ENCODE measurements at regions of chr4 and their contacts with region 1.

Region 1: DNA sequence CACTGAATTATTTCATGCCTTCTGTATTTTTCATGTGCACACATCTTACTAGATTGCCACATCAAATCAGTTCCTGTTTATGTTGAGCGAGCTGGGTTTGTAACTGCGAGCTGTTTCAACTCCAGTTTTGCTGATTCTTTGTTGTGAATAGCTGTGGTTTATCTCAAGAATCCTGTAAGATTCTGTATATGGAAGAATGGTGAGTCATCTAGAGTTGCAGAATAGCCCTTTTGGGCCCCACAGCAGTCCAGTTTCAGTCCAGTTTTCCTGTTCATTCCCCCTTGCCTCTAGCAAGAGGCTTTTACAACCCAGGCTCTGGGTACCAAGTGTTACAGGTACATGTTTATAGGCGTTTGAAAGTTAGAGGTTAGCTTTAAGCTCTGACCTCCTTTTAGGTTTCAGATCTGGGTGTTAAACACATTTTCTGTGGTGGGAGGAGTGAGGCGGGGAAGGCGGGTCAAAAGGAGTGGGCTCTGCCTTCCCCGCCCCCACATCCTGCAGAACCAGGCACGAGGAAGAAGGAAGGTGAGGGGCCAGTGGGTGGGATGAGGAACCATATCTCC is 32.7 kb downstream of the TBC1D14 start:
- DNase-seq: peak in 13 of 14 experiments; percentile 17 to 79 (median 36)
- ATAC-seq: peak; percentile 86
- H3K4me3 ChIP-seq: peak overlapping the region; percentile 40
- H3K4me3 Mint-ChIP-seq: peak overlapping the region; percentile 83
- H3K27ac ChIP-seq: peak overlapping the region; percentile 62 to 81
- H3K27ac Mint-ChIP-seq: peak overlapping the region; percentile 95
- H3K4me1 ChIP-seq: peaks cover 86% of the 10 kb centered on the region
- H3K4me1 Mint-ChIP-seq: peaks cover 73% of the 10 kb centered on the region
- H3K27me3 ChIP-seq: no peaks in the 10 kb centered on the region
- H3K27me3 Mint-ChIP-seq: no peaks in the 10 kb centered on the region
- CTCF ChIP-seq: no peak

Region 2: DNA sequence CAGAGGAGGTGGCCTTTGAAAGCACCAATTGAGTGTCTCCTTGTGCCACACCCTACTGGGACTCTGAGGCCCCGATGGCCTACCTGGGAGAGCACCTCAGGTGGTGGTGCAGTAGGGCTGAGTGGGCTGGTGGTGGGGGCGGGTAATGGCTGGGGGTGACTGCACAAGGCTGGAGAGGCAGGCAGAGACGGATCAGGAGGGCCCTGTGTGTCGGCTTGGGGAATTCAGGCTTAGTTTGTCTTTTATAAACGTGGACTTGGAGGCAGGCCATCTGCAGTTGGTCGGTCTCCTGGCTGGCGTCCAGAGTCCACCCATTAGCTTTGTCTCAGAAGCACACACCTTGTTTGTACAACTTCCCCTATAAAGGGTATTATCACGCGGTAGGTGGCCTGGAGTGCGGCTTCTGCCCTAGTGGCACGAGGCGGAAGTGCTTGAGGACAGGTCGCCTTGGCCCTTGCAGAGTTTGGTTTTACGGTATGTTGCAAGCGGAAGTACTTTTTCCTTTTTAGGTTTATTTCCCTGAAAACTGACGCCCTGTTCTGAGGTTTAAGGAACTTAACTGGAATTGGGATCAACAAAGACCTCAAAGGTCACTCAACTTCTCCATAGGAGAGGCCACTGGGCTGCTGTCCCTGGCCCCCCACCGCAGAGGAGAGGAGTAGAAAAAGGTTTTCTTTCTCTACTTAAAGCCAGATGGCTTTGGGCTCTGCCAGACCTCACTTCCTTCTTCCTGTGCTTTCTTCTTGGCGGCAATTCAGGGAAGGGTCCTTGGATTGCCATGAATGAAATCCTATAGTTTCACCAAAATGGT is 24.7 kb before region 1 on chr4:
- CTCF ChIA-PET with region 1: interaction called, 4 read pairs
- POLR2A ChIA-PET with region 1: interaction called, 64 read pairs
- intact Hi-C with region 1: loop called in 1 of 2 experiments (anchors 1 kb)
- DNase-seq: peak in 7 of 14 experiments; percentile 27 to 74 (median 48)
- ATAC-seq: peak; percentile 46
- H3K4me3 ChIP-seq: peak overlapping the region; percentile 37
- H3K4me3 Mint-ChIP-seq: peak overlapping the region; percentile 46
- H3K27ac ChIP-seq: peak overlapping the region; percentile 59 to 89
- H3K27ac Mint-ChIP-seq: peak overlapping the region; percentile 90
- H3K4me1 ChIP-seq: peaks cover 95% of the 10 kb centered on the region
- H3K4me1 Mint-ChIP-seq: peaks cover 76% of the 10 kb centered on the region
- H3K27me3 ChIP-seq: no peaks in the 10 kb centered on the region
- H3K27me3 Mint-ChIP-seq: no peaks in the 10 kb centered on the region
- CTCF ChIP-seq: peak; percentile 51

Region 3: DNA sequence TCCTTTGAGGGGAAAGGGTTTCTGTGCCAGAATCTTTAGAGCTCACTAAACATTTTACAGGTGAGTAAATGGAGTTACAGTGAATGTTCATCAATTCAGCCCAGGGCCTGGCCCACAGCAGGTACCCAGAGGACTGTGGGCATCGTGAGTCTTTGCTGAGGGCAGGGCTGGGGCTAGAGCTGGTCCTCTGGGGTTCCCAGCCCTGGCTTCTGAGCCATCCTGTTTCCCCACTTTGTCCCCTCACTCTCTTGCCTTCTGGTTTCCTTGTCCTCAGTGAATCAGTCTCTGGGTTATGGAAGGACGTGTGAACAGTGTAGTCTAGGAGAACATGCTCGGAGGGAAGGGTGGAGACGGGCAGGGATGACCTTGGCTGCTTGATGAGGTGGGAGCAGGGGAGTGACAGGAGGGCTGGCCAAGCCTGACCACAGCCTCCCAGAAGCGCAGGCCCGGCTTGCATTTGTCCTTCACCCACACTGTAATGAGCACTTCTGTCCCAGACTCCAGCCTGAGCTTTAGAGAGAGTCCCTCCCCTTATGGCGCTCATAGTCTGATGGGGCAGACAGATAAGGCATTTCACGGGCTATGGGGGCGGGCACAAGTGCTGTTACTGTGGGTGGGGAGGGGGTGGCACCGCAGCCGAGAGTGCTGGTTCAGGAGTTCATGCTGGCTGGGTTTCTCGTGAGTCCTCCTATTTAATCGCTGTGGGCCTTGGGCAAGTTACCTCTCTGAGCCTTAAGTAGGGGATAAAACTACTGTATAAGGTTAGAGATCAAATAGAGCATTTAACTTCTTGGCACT is 15.4 kb before region 1 on chr4:
- CTCF ChIA-PET with region 1: no interaction called
- POLR2A ChIA-PET with region 1: interaction called, 50 read pairs
- intact Hi-C with region 1: loop called (anchors 1 kb)
- DNase-seq: peak; percentile 42 to 85 (median 67)
- ATAC-seq: peak; percentile 97
- H3K4me3 ChIP-seq: peak overlapping the region; percentile 10
- H3K4me3 Mint-ChIP-seq: peak overlapping the region; percentile 83
- H3K27ac ChIP-seq: peak overlapping the region; percentile 28 to 57
- H3K27ac Mint-ChIP-seq: peak overlapping the region; percentile 92
- H3K4me1 ChIP-seq: peaks cover 79% of the 10 kb centered on the region
- H3K4me1 Mint-ChIP-seq: peaks cover 81% of the 10 kb centered on the region
- H3K27me3 ChIP-seq: no peaks in the 10 kb centered on the region
- H3K27me3 Mint-ChIP-seq: no peaks in the 10 kb centered on the region
- CTCF ChIP-seq: no peak

Region 4: GRCh38 chr4:6974138-6974848 is 32.0 kb after region 1 on chr4:
- CTCF ChIA-PET with region 1: interaction called, 10 read pairs
- POLR2A ChIA-PET with region 1: interaction called, 5 read pairs
- intact Hi-C with region 1: no loop called
- DNase-seq: peak; percentile 56 to 89 (median 77)
- ATAC-seq: peak; percentile 98
- H3K4me3 ChIP-seq: no peak overlapping the region
- H3K4me3 Mint-ChIP-seq: no peak overlapping the region
- H3K27ac ChIP-seq: no peak overlapping the region
- H3K27ac Mint-ChIP-seq: peak overlapping the region; percentile 49
- H3K4me1 ChIP-seq: peaks cover 6% of the 10 kb centered on the region
- H3K4me1 Mint-ChIP-seq: peaks cover 15% of the 10 kb centered on the region
- H3K27me3 ChIP-seq: no peaks in the 10 kb centered on the region
- H3K27me3 Mint-ChIP-seq: no peaks in the 10 kb centered on the region
- CTCF ChIP-seq: peak; percentile 93

Region 5: DNA sequence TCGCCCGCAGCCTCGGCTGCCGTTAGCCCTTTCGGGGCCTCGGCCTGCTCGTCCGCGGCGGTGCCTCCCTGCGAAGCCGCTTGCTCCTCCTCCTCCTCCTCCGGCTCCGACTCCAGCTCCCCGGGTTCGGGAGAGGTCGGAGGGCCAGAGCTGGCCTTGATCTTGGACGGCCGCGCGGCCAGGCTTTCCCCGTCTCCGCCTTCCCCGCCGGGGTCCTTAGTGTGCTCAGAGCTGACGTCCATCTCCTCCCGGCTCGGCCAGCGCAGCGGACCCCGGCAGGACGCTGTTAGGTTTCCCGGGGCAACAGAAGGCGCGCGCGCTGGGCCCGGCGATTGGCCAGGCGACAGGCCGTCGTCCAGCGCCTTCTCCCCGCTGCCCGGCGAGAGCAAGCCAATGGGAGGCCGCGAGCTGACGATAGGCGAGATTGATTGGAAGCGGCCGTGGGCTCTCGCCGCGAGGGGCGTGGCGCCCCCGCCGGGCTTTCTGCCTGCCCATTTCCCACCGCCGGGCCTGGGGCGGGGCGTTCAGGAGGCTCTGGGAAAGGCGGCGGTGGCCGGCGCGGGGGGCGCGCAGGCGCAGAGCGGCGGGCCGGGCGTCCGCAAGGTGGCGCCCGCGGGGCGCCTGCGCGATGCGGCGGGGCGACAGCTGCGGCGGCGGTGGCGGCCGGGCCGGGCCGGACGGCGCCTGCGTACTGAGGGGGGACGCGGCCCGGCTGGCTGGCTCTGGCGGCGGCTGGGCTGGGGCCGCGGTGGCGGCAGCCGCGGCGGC is 100.6 kb after region 1 on chr4 and contains the start of gene TADA2B:
- CTCF ChIA-PET with region 1: no interaction called
- POLR2A ChIA-PET with region 1: interaction called, 14 read pairs
- intact Hi-C with region 1: no loop called
- DNase-seq: peak; percentile 72 to 97 (median 89)
- ATAC-seq: peak; percentile 76
- H3K4me3 ChIP-seq: peak within 1 kb of the TSS; percentile 87
- H3K4me3 Mint-ChIP-seq: peak within 1 kb of the TSS; percentile 93
- H3K27ac ChIP-seq: peak within 1 kb of the TSS; percentile 44 to 81
- H3K27ac Mint-ChIP-seq: peak within 1 kb of the TSS; percentile 82
- H3K4me1 ChIP-seq: peaks cover 55% of the 10 kb centered on the region
- H3K4me1 Mint-ChIP-seq: peaks cover 57% of the 10 kb centered on the region
- H3K27me3 ChIP-seq: no peaks in the 10 kb centered on the region
- H3K27me3 Mint-ChIP-seq: no peaks in the 10 kb centered on the region
- CTCF ChIP-seq: peak; percentile 22
- total RNA-seq, gene TADA2B: 41.5 to 44.6 TPM

Measured in CD4-positive, alpha-beta T cell (primary cell).